ENCODE measurements at regions of chr17 and their contacts with region 1.

Region 1: DNA sequence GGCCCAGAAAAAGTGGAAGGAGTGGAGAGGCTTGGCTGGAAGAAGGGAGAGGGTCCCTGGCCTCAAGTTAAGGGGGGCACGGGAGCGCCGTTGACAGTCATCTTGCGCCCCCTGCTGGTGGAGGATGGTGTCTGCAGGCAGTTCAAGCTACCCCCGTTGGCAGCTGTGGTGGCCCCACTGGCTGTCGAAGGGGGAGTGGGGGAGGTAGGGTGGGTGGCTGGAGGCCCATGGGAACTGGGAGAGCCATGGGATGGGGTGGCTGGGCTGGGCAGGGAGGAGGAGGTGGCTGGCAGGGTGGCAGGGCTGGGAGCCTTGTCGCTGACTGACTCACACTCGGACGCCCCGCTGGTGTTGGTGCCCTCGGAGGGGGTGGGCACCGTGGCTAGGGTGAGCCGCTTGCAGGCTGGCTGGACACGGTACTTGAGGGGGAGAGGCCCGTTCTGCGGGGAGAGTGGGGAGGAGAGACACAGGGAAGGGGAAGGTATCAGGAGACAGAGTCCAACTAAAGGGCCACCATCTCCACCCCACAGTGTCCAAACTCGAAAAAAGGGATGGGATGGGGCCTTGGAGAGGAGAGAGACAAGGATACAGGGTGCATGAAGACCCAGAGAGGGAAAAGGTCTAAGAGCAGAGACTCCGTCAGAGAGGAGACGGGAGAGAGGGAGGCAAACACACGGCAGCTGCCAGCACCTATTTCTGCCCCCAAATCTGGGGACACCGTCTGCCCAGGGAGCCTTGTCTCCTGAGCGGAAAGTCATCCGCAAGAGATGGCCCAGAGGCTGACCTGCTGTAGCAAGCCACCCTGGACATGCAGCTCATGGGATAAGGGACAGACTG is 5.2 kb downstream of the CISD3 start:
- DNase-seq: peak; percentile 82
- ATAC-seq: peak; percentile 34
- H3K4me3 Mint-ChIP-seq: no peak overlapping the region
- H3K27ac Mint-ChIP-seq: peak overlapping the region; percentile 55
- H3K4me1 Mint-ChIP-seq: peaks cover 45% of the 10 kb centered on the region
- H3K27me3 Mint-ChIP-seq: no peaks in the 10 kb centered on the region
- CTCF ChIP-seq: peak; percentile 90

Region 2: GRCh38 chr17:38674749-38675615 is 60.4 kb before region 1 on chr17 and contains the start of gene EPOP:
- CTCF ChIA-PET with region 1: interaction called, 160 read pairs
- POLR2A ChIA-PET with region 1: interaction called, 10 read pairs
- intact Hi-C with region 1: no loop called
- DNase-seq: peak; percentile 93
- ATAC-seq: peak; percentile 77
- H3K4me3 Mint-ChIP-seq: peak within 1 kb of the TSS; percentile 76
- H3K27ac Mint-ChIP-seq: peak within 1 kb of the TSS; percentile 75
- H3K4me1 Mint-ChIP-seq: peaks cover 41% of the 10 kb centered on the region
- H3K27me3 Mint-ChIP-seq: peaks cover 15% of the 10 kb centered on the region
- CTCF ChIP-seq: no peak
- total RNA-seq, gene EPOP: 31.8 to 32.2 TPM

Region 3: DNA sequence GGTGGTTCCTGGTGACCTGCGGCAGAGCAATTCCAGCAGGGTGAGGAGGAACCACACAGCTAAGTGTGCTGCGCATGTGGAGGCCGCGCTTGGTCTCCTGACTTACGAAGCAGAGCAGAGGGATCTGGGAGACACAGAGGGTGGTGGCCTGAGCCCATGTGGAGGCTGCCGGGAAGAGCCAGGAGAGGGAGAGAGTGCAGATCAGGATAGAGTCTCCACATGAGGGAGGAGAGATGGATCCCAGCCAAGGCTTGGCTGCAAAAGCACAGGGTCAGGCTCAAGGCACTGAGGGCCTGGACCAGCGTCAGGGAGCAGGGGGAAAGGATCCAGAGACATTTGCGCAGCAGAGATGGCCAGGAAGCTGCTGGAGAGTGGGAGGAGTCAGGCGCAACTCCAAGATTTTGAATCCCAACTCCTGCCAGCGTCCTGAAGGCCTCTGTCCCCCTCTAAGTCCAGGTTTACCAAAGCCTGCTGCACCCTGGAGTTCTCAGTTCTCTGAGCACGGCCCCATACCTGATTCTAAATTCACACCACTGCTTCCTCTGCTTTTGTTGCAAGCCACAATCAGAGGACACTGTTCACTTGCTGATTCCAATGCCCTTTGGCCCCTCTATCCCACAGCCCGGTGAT is 41.6 kb before region 1 on chr17:
- CTCF ChIA-PET with region 1: interaction called, 20 read pairs
- POLR2A ChIA-PET with region 1: interaction called, 3 read pairs
- intact Hi-C with region 1: loop called (anchors 5 kb)
- DNase-seq: no peak
- ATAC-seq: no peak
- H3K4me3 Mint-ChIP-seq: no peak overlapping the region
- H3K27ac Mint-ChIP-seq: no peak overlapping the region
- H3K4me1 Mint-ChIP-seq: peaks cover 21% of the 10 kb centered on the region
- H3K27me3 Mint-ChIP-seq: no peaks in the 10 kb centered on the region
- CTCF ChIP-seq: no peak

Region 4: DNA sequence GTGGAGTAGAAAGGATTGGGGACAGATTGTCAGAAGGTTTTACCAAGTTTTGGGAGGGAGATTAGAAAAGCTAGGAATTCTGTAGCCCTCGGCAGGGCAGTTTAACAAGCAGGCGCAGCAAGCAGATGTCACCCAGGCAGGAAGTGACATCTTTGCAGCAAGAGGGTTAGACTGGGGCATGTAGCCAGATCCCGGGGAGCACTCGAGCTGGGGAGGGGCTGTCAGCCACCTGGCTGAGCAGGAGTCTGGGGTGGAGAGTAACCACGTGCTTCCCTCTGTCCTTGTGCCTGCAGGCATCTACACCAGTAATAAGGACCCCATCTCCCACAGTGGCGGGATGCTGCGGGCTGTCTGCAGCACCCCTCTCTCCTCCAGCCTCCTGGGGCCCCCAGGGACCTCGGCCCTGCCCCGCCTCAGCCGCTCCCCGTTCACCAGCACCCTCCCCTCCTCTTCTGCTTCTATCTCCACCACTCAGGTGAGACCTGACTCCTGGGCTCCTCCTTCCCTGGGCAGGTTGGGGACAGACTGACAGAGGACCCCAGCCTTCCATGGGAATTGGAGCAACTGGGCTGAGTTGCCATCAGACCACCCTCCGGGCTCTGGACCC is 18.1 kb before region 1 on chr17:
- CTCF ChIA-PET with region 1: interaction called, 16 read pairs
- POLR2A ChIA-PET with region 1: interaction called, 4 read pairs
- intact Hi-C with region 1: no loop called
- DNase-seq: no peak
- ATAC-seq: no peak
- H3K4me3 Mint-ChIP-seq: no peak overlapping the region
- H3K27ac Mint-ChIP-seq: peak overlapping the region; percentile 69
- H3K4me1 Mint-ChIP-seq: peaks cover 39% of the 10 kb centered on the region
- H3K27me3 Mint-ChIP-seq: no peaks in the 10 kb centered on the region
- CTCF ChIP-seq: no peak

Region 5: DNA sequence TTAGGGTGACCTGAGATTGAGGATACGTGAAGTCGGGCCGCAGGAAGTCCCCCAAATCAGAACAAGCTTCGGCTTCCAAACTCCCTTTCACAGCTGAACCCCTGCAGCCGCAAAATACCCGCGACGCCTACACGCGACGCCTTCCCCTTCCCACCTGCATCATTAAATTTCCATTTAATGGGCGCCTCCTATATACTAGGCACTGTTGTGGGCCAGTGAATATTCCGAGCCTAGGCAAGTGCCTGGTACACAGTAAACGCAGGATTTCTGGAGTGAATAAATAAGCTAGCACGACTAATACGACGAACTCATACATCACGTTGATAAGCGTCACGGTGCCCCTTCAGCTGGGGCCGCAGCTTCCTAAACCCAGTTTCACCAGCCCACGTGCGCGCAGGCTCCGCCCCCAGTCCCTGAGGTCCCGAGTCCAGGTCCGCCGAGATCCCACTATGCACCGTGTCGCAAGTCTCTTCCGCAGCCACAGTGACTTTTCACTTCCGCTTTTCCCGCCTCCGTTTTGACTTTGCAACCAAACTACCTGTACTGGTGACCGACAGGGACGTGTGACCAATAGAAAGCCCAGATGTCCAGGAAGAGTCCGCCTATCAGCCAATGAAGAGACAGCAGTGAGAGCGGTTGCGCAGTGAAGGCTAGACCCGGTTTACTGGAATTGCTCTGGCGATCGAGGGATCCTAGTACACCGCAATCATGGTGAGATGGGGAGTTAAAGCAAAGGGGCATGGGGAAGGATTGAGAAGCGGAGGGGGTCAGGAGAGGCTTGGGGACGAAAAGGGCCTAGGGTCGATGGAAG is 16.9 kb after region 1 on chr17 and contains the start of gene PSMB3:
- CTCF ChIA-PET with region 1: interaction called, 42 read pairs
- POLR2A ChIA-PET with region 1: interaction called, 5 read pairs
- intact Hi-C with region 1: no loop called
- DNase-seq: peak; percentile 100
- ATAC-seq: peak; percentile 89
- H3K4me3 Mint-ChIP-seq: peak within 1 kb of the TSS; percentile 91
- H3K27ac Mint-ChIP-seq: peak within 1 kb of the TSS; percentile 96
- H3K4me1 Mint-ChIP-seq: peaks cover 39% of the 10 kb centered on the region
- H3K27me3 Mint-ChIP-seq: peaks cover 26% of the 10 kb centered on the region
- CTCF ChIP-seq: no peak
- total RNA-seq, gene PSMB3: 275 to 279 TPM